ENCODE measurements at regions of chr15 and their contacts with region 1.

Region 1: GRCh38 chr15:89647191-89647851 is 7.9 kb downstream of the KIF7 start:
- DNase-seq: no peak
- H3K4me3 ChIP-seq: no peak overlapping the region
- CTCF ChIP-seq: peak; percentile 95

Region 2: GRCh38 chr15:89614164-89614563 is 33.2 kb before region 1 on chr15:
- CTCF ChIA-PET with region 1: interaction called, 15 read pairs
- POLR2A ChIA-PET with region 1: no interaction called
- DNase-seq: no peak
- H3K4me3 ChIP-seq: no peak overlapping the region
- CTCF ChIP-seq: no peak

Region 3: GRCh38 chr15:89623165-89623564 is 24.2 kb before region 1 on chr15:
- CTCF ChIA-PET with region 1: interaction called, 16 read pairs
- POLR2A ChIA-PET with region 1: no interaction called
- DNase-seq: no peak
- H3K4me3 ChIP-seq: no peak overlapping the region
- CTCF ChIP-seq: no peak

Region 4: GRCh38 chr15:89630974-89631901 is 16.1 kb before region 1 on chr15:
- CTCF ChIA-PET with region 1: interaction called, 16 read pairs
- POLR2A ChIA-PET with region 1: no interaction called
- DNase-seq: no peak
- H3K4me3 ChIP-seq: no peak overlapping the region
- CTCF ChIP-seq: no peak

Region 5: GRCh38 chr15:89665449-89666181 is 18.3 kb after region 1 on chr15:
- CTCF ChIA-PET with region 1: interaction called, 31 read pairs
- POLR2A ChIA-PET with region 1: no interaction called
- DNase-seq: no peak
- H3K4me3 ChIP-seq: peak overlapping the region; percentile 36
- CTCF ChIP-seq: no peak

Region 6: DNA sequence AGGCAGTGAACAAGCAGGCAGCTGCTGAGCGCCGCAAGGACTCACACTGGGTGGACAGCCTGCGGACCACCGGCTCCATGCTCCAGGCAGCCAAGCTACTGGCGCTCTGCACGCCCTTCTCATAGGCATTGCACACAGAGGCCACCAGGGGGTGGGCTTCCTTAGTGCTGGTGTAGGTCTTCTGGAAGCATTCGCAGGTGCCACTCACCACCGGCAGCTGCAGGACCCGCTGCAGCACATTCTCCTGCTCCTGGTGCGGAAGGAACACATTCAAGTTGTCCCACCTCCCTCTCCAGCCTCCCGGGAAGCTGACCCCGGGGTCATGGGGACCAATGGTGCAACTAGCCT is 25.8 kb after region 1 on chr15:
- CTCF ChIA-PET with region 1: interaction called, 20 read pairs
- POLR2A ChIA-PET with region 1: no interaction called
- DNase-seq: no peak
- H3K4me3 ChIP-seq: no peak overlapping the region
- CTCF ChIP-seq: peak; percentile 56

Region 7: DNA sequence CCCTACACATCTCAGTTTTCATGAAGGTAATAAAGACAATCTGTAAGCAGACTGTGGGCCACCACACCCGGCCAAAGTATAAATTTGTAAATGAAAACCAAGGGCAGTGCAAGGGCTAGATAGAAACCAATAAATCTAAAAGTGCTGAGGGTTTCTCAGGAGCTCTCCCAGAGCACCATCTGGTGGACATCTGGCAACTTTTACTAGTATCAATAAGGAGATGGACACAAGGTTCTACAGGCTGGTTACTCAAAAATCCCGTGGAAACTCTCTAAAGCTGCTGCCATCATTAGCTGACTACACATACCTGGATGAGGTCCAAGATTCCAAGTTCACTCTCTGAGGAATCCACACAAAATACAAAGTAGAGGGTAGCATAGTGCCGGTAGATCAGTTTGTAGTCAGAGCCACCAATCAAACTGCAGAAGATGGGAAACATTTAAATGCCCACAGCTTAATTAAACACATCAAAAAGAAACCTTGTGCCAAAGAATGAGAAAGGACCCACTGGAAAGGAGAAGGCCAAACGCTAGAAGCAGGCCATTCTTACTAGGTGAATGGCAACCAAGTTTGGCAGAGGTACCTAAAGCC is 241.0 kb after region 1 on chr15:
- CTCF ChIA-PET with region 1: interaction called, 20 read pairs
- POLR2A ChIA-PET with region 1: no interaction called
- DNase-seq: peak; percentile 69
- H3K4me3 ChIP-seq: no peak overlapping the region
- CTCF ChIP-seq: peak; percentile 53

Measured in AG04449 (cell line).